Mammary epithelial cell (primary cell): ENCODE measurements at regions of chr17 and their contacts with region 1.

Region 1: GRCh38 chr17:78840725-78841611 is at the start of gene USP36:
- DNase-seq: peak; percentile 99
- H3K4me3 ChIP-seq: peak within 1 kb of the TSS; percentile 76 to 88 (median 79)
- H3K27ac ChIP-seq: peak within 1 kb of the TSS; percentile 89
- H3K4me1 ChIP-seq: peaks cover 15% of the 10 kb centered on the region
- H3K27me3 ChIP-seq: no peaks in the 10 kb centered on the region
- CTCF ChIP-seq: peak in 1 of 2 donors; percentile 11
- total RNA-seq, gene USP36: 35.7 to 80.8 TPM

Region 2: GRCh38 chr17:78600181-78600721 is 240.7 kb before region 1 on chr17:
- CTCF ChIA-PET with region 1: no interaction called
- dilution Hi-C with region 1: no loop called
- in situ Hi-C with region 1: no loop called
- intact Hi-C with region 1: no loop called
- DNase-seq: no peak
- H3K4me3 ChIP-seq: no peak overlapping the region
- H3K27ac ChIP-seq: no peak overlapping the region
- H3K4me1 ChIP-seq: no peaks in the 10 kb centered on the region
- H3K27me3 ChIP-seq: no peaks in the 10 kb centered on the region
- CTCF ChIP-seq: no peak

Region 3: GRCh38 chr17:78771758-78772382 is 69.1 kb before region 1 on chr17:
- CTCF ChIA-PET with region 1: no interaction called
- dilution Hi-C with region 1: no loop called
- in situ Hi-C with region 1: no loop called
- intact Hi-C with region 1: no loop called
- DNase-seq: peak; percentile 27
- H3K4me3 ChIP-seq: no peak overlapping the region
- H3K27ac ChIP-seq: peak overlapping the region; percentile 38
- H3K4me1 ChIP-seq: peaks cover 21% of the 10 kb centered on the region
- H3K27me3 ChIP-seq: no peaks in the 10 kb centered on the region
- CTCF ChIP-seq: no peak

Region 4: DNA sequence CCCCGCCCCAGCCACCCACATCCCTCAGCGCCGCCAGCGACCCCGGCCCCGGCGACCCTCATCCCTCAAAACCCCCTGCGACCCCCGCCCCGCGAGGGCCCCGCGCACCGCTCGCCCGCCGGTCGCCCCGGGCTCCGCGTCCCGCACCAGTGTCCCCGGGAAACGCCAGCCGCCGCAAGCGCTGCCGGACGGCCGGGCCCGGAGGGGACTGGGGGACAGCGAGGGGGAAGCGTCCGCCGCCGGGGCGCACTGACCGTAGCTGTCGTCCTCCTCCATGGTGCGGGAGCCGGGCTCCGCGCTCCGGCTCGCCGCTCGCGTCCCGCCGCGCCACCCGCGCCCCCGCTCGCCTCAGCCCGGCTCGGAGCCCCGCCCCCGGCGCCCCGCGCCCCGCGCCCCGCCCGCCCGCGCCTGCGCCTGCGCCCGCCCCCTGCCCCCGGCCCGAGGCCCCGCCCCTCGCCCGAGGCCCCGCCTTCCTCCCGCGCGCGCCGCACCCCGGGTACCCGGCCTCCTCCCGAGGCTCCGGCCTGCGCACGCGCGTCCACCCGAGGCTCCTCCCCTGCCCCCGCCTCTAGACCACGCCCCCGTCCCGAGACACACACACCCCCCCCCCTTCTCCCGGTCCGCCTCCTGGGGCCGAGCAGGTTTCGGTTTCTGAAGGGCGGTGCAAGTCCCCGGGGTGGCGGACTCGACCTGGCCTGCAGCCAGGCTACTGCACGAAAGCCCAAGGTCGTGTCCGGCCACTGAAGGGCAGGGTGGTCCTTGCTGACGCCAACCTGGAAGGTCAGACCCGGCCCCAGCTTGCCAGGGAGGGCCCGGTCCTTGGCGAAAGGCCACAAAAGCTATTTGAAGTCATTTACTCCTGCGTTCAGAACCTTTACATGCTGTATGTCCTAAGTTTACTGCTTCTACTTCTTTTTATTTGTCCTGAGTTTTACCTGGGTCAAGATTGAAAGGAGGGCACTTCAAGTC is 58.7 kb before region 1 on chr17 and contains the start of gene CYTH1:
- CTCF ChIA-PET with region 1: no interaction called
- dilution Hi-C with region 1: no loop called
- in situ Hi-C with region 1: no loop called
- intact Hi-C with region 1: no loop called
- DNase-seq: peak; percentile 90
- H3K4me3 ChIP-seq: peak within 1 kb of the TSS; percentile 93 to 99 (median 97)
- H3K27ac ChIP-seq: peak within 1 kb of the TSS; percentile 99
- H3K4me1 ChIP-seq: peaks cover 20% of the 10 kb centered on the region
- H3K27me3 ChIP-seq: peaks cover 1% of the 10 kb centered on the region
- CTCF ChIP-seq: no peak
- total RNA-seq, gene CYTH1: 25.8 to 35.7 TPM

Region 5: GRCh38 chr17:78798695-78799559 is 42.0 kb before region 1 on chr17:
- CTCF ChIA-PET with region 1: no interaction called
- dilution Hi-C with region 1: loop called (anchors 5 kb)
- in situ Hi-C with region 1: no loop called
- intact Hi-C with region 1: no loop called
- DNase-seq: peak; percentile 37
- H3K4me3 ChIP-seq: no peak overlapping the region
- H3K27ac ChIP-seq: no peak overlapping the region
- H3K4me1 ChIP-seq: peaks cover 41% of the 10 kb centered on the region
- H3K27me3 ChIP-seq: no peaks in the 10 kb centered on the region
- CTCF ChIP-seq: peak; percentile 12 to 48

Region 6: GRCh38 chr17:78883164-78884122 is 42.5 kb after region 1 on chr17:
- CTCF ChIA-PET with region 1: no interaction called
- dilution Hi-C with region 1: no loop called
- in situ Hi-C with region 1: no loop called
- intact Hi-C with region 1: loop called (anchors 5 kb)
- DNase-seq: peak; percentile 80
- H3K4me3 ChIP-seq: peak overlapping the region in 2 of 3 experiments; percentile 12 to 24
- H3K27ac ChIP-seq: peak overlapping the region; percentile 73
- H3K4me1 ChIP-seq: peaks cover 26% of the 10 kb centered on the region
- H3K27me3 ChIP-seq: no peaks in the 10 kb centered on the region
- CTCF ChIP-seq: peak in 1 of 2 donors; percentile 14

Region 7: DNA sequence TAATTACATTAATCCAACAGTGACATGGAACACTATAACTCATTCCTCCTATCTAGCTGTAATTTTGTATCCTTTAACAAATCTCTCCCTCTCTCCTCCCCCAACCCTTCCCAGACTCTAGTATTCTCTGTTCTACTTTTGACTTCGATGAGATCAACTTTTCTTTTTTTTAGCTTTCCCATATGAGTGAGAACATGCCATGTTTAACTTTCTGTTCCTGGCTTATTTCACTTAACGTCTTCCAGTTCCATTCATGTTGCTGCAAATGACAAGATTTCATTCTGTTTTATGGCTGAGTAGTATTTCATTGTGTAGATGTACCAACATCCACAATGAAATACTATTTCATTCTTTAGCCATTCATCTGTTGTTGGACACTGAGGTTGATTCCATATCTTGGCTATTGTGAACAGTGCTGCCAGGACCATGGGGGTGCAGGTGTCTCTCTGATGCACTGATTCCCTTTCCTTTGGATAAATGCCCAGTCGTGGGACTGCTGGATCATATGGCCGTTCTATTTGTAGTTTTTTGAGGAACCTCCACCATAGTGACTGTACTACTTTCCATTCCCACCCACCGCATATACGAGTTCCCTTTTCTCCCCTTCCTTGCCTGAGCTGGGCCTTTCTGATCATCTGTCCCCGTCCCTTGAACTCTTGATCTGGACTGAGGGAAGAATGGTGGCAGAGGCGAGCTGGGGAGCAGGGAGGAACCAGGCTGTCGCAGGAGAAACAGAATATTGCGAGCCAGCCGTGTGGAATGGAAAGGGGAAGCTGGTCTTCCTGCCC is 69.7 kb after region 1 on chr17:
- CTCF ChIA-PET with region 1: no interaction called
- dilution Hi-C with region 1: no loop called
- in situ Hi-C with region 1: no loop called
- intact Hi-C with region 1: no loop called
- DNase-seq: no peak
- H3K4me3 ChIP-seq: no peak overlapping the region
- H3K27ac ChIP-seq: no peak overlapping the region
- H3K4me1 ChIP-seq: no peaks in the 10 kb centered on the region
- H3K27me3 ChIP-seq: no peaks in the 10 kb centered on the region
- CTCF ChIP-seq: no peak

Region 8: GRCh38 chr17:78925234-78925633 is 84.3 kb after region 1 on chr17 and contains the start of gene TIMP2:
- CTCF ChIA-PET with region 1: no interaction called
- dilution Hi-C with region 1: loop called (anchors 5 kb)
- in situ Hi-C with region 1: no loop called
- intact Hi-C with region 1: loop called (anchors 2 kb)
- DNase-seq: no peak
- H3K4me3 ChIP-seq: peak within 1 kb of the TSS; percentile 22 to 49 (median 40)
- H3K27ac ChIP-seq: no peak within 1 kb of the TSS
- H3K4me1 ChIP-seq: peaks cover 9% of the 10 kb centered on the region
- H3K27me3 ChIP-seq: peaks cover 1% of the 10 kb centered on the region
- CTCF ChIP-seq: no peak
- total RNA-seq, gene TIMP2: 20.7 to 31.2 TPM

Region 9: DNA sequence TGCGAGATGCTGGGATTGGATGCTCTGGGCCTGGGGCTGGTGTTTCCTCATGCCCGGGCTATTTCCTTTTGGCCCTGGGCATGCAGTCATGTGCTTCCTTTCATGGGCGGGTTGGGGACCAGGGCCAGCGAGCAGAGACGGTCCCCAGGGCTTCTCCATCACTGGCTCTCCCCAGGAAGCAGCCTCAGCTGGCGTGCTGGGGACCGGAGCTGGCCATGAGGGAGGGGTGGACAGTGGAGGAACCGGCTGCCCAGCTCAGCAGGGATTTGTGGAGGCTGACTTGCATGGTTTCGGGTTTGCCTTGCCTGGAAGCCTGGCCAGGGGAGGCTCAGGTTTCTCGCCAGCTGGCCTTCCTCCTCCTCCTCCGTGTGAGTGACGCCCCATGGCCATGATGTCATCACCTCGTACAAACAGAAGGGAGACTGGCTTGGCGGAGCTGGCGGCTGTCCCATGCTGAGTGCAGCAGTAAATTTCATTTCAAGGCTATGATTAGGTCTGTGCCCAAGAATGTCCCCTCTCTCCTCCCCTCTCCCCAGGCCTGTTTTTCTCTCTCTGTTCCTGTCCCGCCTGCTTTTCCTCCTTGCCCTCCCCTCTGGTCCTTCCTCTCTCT is 93.1 kb after region 1 on chr17:
- CTCF ChIA-PET with region 1: no interaction called
- dilution Hi-C with region 1: loop called (anchors 5 kb)
- in situ Hi-C with region 1: no loop called
- intact Hi-C with region 1: no loop called
- DNase-seq: peak; percentile 90
- H3K4me3 ChIP-seq: no peak overlapping the region
- H3K27ac ChIP-seq: peak overlapping the region; percentile 36
- H3K4me1 ChIP-seq: peaks cover 25% of the 10 kb centered on the region
- H3K27me3 ChIP-seq: no peaks in the 10 kb centered on the region
- CTCF ChIP-seq: no peak

Region 10: GRCh38 chr17:78970834-78971773 is 130.1 kb after region 1 on chr17:
- CTCF ChIA-PET with region 1: no interaction called
- dilution Hi-C with region 1: no loop called
- in situ Hi-C with region 1: no loop called
- intact Hi-C with region 1: loop called (anchors 1 kb)
- DNase-seq: peak; percentile 47
- H3K4me3 ChIP-seq: no peak overlapping the region
- H3K27ac ChIP-seq: no peak overlapping the region
- H3K4me1 ChIP-seq: peaks cover 32% of the 10 kb centered on the region
- H3K27me3 ChIP-seq: no peaks in the 10 kb centered on the region
- CTCF ChIP-seq: peak; percentile 84 to 88